Motor neuron (in vitro differentiated cells): ENCODE measurements at regions of chrX and their contacts with region 1.

Region 1: DNA sequence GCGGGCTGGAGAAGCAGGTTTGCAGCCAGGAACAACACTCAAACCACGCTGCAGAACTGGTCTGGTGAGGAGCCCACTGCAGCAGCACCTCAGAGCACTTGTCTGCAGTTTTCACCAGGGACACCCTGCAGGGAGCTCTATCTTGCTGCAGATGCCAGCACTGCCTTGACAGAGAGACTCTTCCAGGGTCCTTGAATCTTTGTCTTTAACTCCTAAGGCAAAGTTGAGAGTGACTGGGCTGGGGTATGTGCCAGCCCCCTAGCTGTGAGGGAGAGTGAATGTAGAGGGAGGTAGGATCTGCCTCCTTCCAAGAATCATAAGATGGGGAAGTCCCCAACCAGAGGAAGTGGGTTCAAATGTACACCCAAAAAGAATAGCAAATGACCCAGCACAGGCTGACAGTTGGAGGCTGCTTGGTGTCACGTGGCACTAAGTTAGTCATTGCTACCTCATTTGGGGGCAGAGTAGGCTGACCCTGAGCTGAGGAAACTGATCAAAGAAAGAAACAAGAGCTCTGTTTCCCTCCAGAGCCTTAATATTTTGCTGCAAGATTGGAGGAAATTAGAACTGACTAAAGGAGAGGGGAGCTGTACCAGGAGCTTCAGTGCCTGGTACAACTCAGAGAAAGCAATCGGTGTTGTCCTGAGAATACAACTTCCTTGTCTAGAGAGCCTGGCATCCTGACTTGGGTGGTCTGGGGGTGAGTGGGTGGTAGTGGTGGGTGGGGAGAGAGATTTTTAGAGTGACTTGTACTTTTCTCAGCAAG is 28.2 kb upstream of the HUWE1 start:
- ATAC-seq: peak in 1 of 8 experiments; percentile 16
- H3K4me3 ChIP-seq: no peak overlapping the region
- H3K27ac ChIP-seq: no peak overlapping the region
- H3K4me1 ChIP-seq: no peaks in the 10 kb centered on the region

Region 2: GRCh38 chrX:53813650-53814440 is 99.1 kb after region 1 on chrX:
- in situ Hi-C with region 1: loop called in 1 of 9 experiments (anchors 25 kb)
- ATAC-seq: peak in 2 of 8 experiments; percentile 44 to 54
- H3K4me3 ChIP-seq: no peak overlapping the region
- H3K27ac ChIP-seq: no peak overlapping the region
- H3K4me1 ChIP-seq: no peaks in the 10 kb centered on the region

Region 3: DNA sequence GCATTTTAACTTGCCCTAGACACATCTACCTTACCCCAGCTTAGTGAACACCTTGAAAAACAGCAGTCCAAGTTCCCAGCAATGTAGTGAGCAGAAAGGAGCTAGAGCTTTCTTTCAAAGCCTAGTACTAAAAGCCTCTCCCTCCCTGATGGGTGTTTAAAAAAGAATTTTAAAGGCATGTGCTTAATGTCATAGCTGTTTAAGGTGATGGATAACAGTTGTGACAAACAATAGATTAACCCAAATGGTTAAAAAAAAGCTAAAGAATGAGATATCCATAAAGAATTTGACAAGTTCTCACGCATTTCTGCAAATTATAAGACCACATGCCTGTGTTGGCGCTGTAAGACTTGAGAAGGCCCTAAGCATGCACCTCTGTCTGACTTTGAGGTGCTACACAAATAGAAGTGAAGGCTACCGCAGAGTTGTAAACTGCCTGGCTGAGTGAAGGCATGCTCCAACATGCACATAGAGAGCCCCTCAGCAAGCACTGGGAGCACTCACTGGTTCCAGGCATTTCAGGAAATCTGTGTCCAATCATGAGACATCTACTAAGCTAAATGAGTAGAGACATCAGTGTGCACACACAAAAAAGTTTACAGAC is 235.5 kb after region 1 on chrX:
- in situ Hi-C with region 1: no loop called
- ATAC-seq: no peak
- H3K4me3 ChIP-seq: no peak overlapping the region
- H3K27ac ChIP-seq: no peak overlapping the region
- H3K4me1 ChIP-seq: no peaks in the 10 kb centered on the region